GM13977 (cell line): ENCODE measurements at regions of chr2 and their contacts with region 1.

Region 1: GRCh38 chr2:71157124-71157793 is 26.8 kb downstream of the MPHOSPH10 start:
- DNase-seq: peak; percentile 61
- CTCF ChIP-seq: peak; percentile 76

Region 2: DNA sequence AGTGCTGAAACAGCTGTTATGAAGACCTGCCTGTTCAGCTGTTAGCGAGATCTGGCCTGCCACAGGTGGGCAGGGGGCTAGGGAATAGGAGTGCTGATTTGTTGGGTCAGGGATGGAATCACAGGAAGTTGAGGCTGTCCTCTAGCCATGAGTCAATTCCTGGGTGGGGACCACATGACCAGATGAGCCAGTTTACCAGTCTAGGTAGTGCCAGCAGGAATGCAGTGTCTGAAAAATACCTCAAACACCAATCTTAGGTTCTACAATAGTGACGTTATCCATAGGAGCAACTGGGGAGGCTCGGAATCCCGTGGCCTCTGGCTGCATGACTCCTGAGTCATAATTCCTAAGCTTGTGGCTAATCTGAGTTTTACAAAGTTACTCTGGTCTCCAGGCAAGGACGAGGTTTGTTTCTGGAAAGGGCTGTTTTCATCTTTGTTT is 341.0 kb after region 1 on chr2:
- in situ Hi-C with region 1: loop called (anchors 25 kb)
- DNase-seq: no peak
- CTCF ChIP-seq: no peak

Region 3: GRCh38 chr2:71618327-71619113 is 461.3 kb after region 1 on chr2:
- in situ Hi-C with region 1: no loop called
- DNase-seq: no peak
- CTCF ChIP-seq: no peak